BJ (cell line): ENCODE measurements at regions of chr2 and their contacts with region 1.

Region 1: GRCh38 chr2:43024515-43025011 is 201.8 kb downstream of the ZFP36L2 start:
- DNase-seq: no peak
- H3K4me3 ChIP-seq: no peak overlapping the region
- H3K27me3 ChIP-seq: no peaks in the 10 kb centered on the region
- CTCF ChIP-seq: peak; percentile 94

Region 2: DNA sequence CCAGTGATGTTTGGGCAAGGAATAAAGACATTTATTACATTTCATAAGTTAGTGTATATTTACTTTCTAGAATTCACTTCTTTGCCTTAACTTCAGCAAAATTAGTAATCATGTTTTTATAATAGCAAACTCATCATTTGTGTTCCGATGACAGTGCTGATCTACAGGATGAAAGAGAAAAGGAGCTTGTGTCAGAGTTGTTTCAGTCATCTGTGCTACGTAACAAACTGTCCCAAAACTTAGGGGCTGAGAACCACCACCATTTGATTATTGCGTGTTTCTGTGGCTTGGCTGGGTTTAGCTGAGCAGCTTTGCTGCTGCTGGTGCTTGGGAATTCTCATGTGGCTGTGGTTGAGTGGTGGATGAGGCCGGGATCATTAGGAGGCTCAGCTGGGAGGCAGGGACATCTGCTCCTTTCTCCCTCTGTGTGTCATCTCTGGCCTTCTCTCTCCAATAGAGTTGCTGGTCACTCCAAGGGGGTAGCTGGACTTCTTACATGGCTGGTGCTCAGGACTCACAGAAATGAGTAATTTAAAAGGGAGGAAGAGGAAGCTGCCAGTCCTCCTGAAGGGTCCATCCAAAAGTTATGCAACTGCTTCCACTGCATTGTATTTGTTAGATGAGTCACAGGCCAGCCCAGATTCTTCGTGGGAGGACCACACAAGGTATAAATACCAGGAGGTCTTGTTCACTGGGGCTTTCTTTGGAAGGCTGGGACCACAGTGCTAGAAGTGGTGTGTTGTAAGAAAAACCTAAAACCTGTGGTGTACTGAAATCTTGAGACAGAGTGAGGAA is 188.8 kb before region 1 on chr2:
- CTCF ChIA-PET with region 1: no interaction called
- POLR2A ChIA-PET with region 1: no interaction called
- DNase-seq: peak; percentile 97
- H3K4me3 ChIP-seq: no peak overlapping the region
- H3K27me3 ChIP-seq: no peaks in the 10 kb centered on the region
- CTCF ChIP-seq: no peak

Region 3: GRCh38 chr2:43005245-43005974 is 19.2 kb before region 1 on chr2:
- CTCF ChIA-PET with region 1: no interaction called
- POLR2A ChIA-PET with region 1: no interaction called
- DNase-seq: no peak
- H3K4me3 ChIP-seq: no peak overlapping the region
- H3K27me3 ChIP-seq: no peaks in the 10 kb centered on the region; the same call in 1 of the 2 replicates
- CTCF ChIP-seq: no peak

Region 4: GRCh38 chr2:43041661-43042360 is 17.2 kb after region 1 on chr2:
- CTCF ChIA-PET with region 1: interaction called, 14 read pairs
- POLR2A ChIA-PET with region 1: no interaction called
- DNase-seq: peak; percentile 89
- H3K4me3 ChIP-seq: no peak overlapping the region
- H3K27me3 ChIP-seq: no peaks in the 10 kb centered on the region
- CTCF ChIP-seq: no peak

Region 5: DNA sequence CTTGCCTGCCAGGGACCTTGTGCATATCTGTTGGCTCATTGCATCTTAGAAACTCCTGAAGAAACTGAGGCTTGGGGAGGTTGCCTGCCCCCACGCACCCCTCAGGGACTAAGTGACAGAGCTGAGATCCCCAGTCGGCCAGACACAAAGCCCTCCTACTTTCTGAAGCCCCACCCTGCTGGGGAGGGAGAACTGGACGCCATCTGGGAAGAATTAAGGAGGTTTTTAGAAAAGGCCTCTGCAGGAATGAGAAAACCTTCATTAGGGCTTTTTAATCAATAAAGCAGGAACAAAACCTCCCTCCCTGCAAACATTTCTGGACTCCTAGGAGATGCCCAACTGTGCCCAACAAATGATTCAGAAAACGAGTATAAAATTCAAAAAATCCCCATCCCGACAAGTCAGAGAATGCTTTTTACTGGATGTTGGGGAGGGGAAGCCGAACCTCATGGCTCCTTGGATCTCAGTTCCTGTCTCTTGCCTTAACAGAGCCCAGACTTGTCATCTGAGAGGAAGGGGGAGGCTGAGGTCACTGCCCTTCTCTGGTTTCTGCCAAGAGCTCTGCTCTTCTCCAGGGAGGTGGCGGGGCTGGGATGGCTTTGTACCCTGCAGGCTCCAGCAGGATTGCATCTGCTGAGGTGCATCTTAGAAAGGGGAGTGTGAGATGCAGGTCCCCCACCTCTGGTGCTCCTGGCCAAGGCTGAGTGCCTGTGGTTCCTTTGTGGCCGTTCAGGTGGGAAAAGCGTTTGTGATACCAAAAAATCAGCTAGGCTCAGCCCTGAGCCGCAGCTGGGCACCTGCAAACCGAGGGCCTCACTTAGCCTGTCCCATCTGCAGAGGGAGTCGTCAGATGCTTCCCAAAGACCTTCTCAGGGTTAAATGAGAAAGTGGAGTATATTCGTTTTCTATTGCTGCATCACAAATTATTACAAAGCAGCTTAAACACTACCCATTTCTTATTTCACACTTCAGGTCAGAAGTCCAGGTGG is 59.4 kb after region 1 on chr2:
- CTCF ChIA-PET with region 1: interaction called, 14 read pairs
- POLR2A ChIA-PET with region 1: no interaction called
- DNase-seq: peak; percentile 59
- H3K4me3 ChIP-seq: no peak overlapping the region
- H3K27me3 ChIP-seq: no peaks in the 10 kb centered on the region
- CTCF ChIP-seq: no peak

Region 6: GRCh38 chr2:43592443-43592842 is 567.9 kb after region 1 on chr2:
- CTCF ChIA-PET with region 1: no interaction called
- POLR2A ChIA-PET with region 1: no interaction called
- DNase-seq: no peak
- H3K4me3 ChIP-seq: no peak overlapping the region
- H3K27me3 ChIP-seq: no peaks in the 10 kb centered on the region
- CTCF ChIP-seq: peak; percentile 13; the same call in 1 of the 2 replicates